ENCODE measurements at regions of chr7 and their contacts with region 1.

Region 1: GRCh38 chr7:6117312-6117932 is 86.2 kb downstream of the ANKRD61 start:
- DNase-seq: no peak
- ATAC-seq: no peak
- H3K4me3 ChIP-seq: no peak overlapping the region
- H3K27ac ChIP-seq: no peak overlapping the region
- H3K4me1 ChIP-seq: no peaks in the 10 kb centered on the region
- H3K27me3 ChIP-seq: no peaks in the 10 kb centered on the region
- CTCF ChIP-seq: no peak

Region 2: DNA sequence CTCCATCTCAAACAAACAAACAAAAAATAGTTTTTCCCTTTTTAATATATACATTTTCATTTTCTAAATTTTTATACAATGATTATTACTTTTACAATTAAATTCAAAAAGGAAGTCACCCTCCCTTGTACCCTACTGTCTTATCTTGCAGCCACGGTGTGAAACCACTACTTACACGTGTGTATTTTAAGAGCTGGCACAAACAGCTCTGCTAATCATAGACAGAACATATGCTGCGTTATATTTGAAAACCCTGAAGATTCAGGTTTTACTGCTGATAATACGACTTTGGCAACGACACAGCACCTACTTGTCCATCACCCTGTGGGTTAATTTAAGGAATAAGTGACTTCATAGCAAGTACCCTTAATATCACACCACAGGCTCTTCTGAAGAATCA is 85.3 kb before region 1 on chr7:
- intact Hi-C with region 1: loop called in 1 of 3 experiments (anchors 10 kb)
- DNase-seq: no peak
- ATAC-seq: no peak
- H3K4me3 ChIP-seq: no peak overlapping the region
- H3K27ac ChIP-seq: no peak overlapping the region
- H3K4me1 ChIP-seq: no peaks in the 10 kb centered on the region
- H3K27me3 ChIP-seq: no peaks in the 10 kb centered on the region
- CTCF ChIP-seq: no peak

Measured in pancreas (tissue), 10 donors.